Sigmoid colon (tissue), 7 donors: ENCODE measurements at regions of chr12 and their contacts with region 1.

Region 1: DNA sequence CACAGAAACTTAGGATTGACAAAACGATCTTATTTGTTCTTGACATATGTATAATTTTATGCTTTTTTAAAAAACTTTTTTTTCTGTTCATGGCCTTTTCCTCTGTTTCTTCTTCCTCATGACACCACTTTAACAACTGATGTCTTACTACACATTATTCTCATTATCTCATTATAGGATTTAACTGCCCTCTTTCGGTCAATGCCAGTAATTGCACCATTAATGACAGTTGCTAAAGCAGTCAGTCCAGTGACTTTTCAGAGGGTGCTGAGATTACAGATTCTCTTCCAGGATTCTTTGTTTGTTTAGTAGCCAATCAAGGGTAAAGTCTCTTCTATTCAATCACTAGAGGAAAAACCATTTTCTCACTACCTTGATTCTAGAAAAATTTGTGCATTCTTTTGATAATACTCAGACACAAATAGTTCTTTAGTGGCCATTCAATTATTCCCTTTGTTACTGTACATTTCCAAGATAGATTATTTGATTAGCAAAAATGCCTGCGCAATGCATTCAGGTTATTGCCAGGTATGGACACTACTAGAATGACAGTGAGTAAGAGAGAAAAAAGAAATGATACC is 50.1 kb downstream of the KLRG1 start:
- DNase-seq: no peak
- H3K4me3 ChIP-seq: no peak overlapping the region
- H3K27ac ChIP-seq: no peak overlapping the region
- H3K4me1 ChIP-seq: no peaks in the 10 kb centered on the region
- H3K27me3 ChIP-seq: no peaks in the 10 kb centered on the region
- CTCF ChIP-seq: peak; percentile 46 to 73 (median 52)
- EP300 ChIP-seq: no peak
- POLR2A ChIP-seq: no peak

Region 2: GRCh38 chr12:8549381-8549780 is 490.1 kb before region 1 on chr12:
- intact Hi-C with region 1: loop called (anchors 5 kb)
- DNase-seq: no peak
- H3K4me3 ChIP-seq: no peak overlapping the region
- H3K27ac ChIP-seq: no peak overlapping the region
- H3K4me1 ChIP-seq: no peaks in the 10 kb centered on the region
- H3K27me3 ChIP-seq: no peaks in the 10 kb centered on the region
- CTCF ChIP-seq: no peak
- EP300 ChIP-seq: no peak
- POLR2A ChIP-seq: no peak

Region 3: DNA sequence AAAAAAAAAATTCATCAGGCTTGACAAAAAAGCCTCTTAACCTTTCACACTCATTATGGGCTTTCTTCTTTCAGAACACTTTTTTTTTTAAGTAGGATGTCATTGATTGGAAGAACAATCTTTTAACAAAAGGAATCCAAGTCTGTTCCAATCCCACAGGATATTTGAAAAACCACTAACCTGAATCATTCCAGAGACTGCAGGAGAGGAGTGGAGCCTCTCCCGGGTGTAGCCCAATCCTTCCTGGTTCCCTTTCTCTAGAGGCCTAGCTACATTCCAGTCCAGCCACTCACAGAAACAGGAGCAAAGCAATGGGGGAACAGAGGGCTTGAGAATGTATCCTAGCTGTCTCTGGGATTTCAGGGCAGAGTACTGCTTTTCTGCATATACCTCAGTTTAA is 381.1 kb before region 1 on chr12:
- intact Hi-C with region 1: loop called (anchors 10 kb)
- DNase-seq: no peak
- H3K4me3 ChIP-seq: no peak overlapping the region
- H3K27ac ChIP-seq: peak overlapping the region in 1 of 4 donors; percentile 47
- H3K4me1 ChIP-seq: peaks cover 0 to 2% (median 0%) of the 10 kb centered on the region in 4 donors
- H3K27me3 ChIP-seq: no peaks in the 10 kb centered on the region
- CTCF ChIP-seq: no peak
- EP300 ChIP-seq: no peak
- POLR2A ChIP-seq: no peak

Region 4: DNA sequence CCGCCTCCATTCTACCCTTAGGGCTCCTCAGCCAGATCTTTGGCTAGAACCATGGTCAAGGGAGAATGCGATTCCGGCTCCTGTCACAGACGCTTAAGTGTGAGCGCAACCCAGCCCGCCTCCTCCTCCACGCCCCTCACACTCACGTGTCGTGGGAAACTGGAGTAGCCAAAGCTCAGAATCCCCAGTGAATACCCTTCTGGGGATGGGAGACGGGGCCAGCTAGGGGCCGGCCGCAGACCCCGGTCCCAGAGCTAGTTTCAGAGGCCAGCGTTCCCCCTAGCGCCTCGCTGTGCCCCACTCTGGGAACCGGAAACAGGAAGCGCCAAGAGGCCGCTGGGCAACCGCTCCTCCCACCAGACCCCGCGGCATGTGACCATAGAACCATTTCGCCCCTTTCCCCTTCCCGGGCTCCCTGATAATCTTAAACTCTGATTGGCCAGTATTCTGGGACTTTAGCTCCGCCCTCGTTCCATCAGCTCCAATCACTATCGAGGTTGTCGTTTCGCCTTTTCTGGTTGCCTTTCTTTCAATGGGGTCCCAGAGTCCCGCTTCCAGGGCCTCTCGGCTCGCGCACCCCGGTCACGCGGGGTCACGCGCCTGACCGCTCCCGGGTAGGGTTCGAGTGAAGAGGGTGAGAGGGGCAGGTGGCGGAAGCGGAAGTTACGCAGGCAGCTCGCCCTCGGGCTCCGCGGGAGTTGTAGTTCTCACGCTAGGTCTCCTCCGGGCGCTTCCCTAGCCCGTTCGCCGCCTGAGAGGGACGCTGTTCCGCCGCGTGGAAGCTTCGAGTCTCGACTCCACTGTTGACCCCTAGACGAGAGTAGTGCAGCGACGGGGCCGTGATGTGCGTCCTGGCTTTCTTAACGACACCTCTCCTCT is 89.9 kb before region 1 on chr12 and contains the start of gene M6PR:
- intact Hi-C with region 1: loop called (anchors 2 kb)
- DNase-seq: peak; percentile 97
- H3K4me3 ChIP-seq: peak within 1 kb of the TSS; percentile 67 to 90 (median 82)
- H3K27ac ChIP-seq: peak within 1 kb of the TSS; percentile 94 to 99 (median 96)
- H3K4me1 ChIP-seq: peaks cover 0 to 31% (median 21%) of the 10 kb centered on the region in 4 donors
- H3K27me3 ChIP-seq: no peaks in the 10 kb centered on the region
- CTCF ChIP-seq: peak; percentile 7 to 43 (median 27)
- EP300 ChIP-seq: no peak
- POLR2A ChIP-seq: peak; percentile 66 to 78
- total RNA-seq, gene M6PR: 63.1 to 97.0 (median 64.9) TPM

Region 5: GRCh38 chr12:9118158-9118557 is 78.7 kb after region 1 on chr12:
- intact Hi-C with region 1: no loop called
- DNase-seq: no peak
- H3K4me3 ChIP-seq: no peak overlapping the region
- H3K27ac ChIP-seq: peak overlapping the region; percentile 79 to 83 (median 82)
- H3K4me1 ChIP-seq: peaks cover 0 to 50% (median 33%) of the 10 kb centered on the region in 4 donors
- H3K27me3 ChIP-seq: no peaks in the 10 kb centered on the region
- CTCF ChIP-seq: no peak
- EP300 ChIP-seq: no peak
- POLR2A ChIP-seq: no peak